Activated B cell treated with CpG ODN at 0.5 μM for 24 hours (primary cell): ENCODE measurements at regions of chr9 and their contacts with region 1.

Region 1: GRCh38 chr9:36935768-36936497 is 98.1 kb downstream of the PAX5 start:
- DNase-seq: no peak
- ATAC-seq: peak; percentile 64
- H3K4me3 Mint-ChIP-seq: peak overlapping the region; percentile 44
- H3K27ac Mint-ChIP-seq: peak overlapping the region; percentile 85
- H3K4me1 Mint-ChIP-seq: peaks cover 92% of the 10 kb centered on the region
- H3K27me3 Mint-ChIP-seq: no peaks in the 10 kb centered on the region
- CTCF ChIP-seq: no peak

Region 2: DNA sequence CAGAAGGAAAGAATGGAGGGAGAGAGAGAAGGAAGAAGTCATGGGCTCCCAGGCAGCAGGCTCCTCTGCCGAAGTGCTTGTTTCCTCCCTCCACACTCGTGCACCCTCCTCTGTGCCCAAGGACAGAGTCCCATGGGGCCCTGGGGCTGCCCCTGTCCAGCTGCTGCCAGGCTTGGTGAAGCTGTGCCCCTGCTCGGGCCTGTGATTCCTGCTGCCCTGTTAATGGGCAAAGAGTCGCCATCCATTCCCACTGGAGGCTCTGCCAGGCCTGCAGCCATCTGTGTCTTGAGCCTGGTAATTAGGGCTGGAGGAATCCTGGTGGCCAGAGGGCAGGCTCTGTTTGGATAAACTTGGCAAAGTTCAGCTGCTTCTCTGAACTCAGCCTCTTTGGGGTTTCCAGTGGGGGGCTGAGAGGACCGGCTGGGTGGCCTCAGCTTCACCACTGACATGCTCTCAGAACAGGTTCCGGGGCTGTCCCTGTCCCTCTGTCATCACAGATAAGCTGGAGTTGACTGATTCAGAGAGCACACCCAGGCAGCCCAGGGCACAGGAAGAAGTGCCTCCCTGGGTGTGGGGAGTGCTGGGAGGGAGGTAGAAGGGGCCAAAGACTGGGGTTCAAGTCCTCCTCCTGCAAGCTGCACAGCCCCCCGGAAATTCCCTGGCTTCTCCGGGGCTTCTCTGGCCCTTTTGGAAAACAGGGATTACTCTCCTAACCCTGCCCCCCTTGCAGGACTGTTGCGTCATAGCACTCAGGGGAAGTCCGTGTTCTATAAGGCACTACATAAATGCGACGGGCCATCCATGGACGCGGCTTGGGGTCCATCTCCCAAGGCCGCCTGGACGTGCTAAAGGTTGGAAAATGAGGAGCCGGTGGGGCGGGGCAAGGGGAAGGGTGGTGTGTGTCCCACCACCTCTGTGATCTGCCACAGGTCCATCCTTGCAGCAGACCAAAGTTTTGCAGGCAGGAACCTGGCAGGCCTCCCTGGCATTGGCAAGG is 56.6 kb before region 1 on chr9:
- CTCF ChIA-PET with region 1: no interaction called
- POLR2A ChIA-PET with region 1: no interaction called
- intact Hi-C with region 1: loop called (anchors 5 kb)
- DNase-seq: no peak
- ATAC-seq: peak; percentile 48
- H3K4me3 Mint-ChIP-seq: peak overlapping the region; percentile 5
- H3K27ac Mint-ChIP-seq: peak overlapping the region; percentile 87
- H3K4me1 Mint-ChIP-seq: peaks cover 81% of the 10 kb centered on the region
- H3K27me3 Mint-ChIP-seq: no peaks in the 10 kb centered on the region
- CTCF ChIP-seq: no peak

Region 3: GRCh38 chr9:36961561-36962298 is 25.8 kb after region 1 on chr9:
- CTCF ChIA-PET with region 1: no interaction called
- POLR2A ChIA-PET with region 1: no interaction called
- intact Hi-C with region 1: no loop called
- DNase-seq: no peak
- ATAC-seq: no peak
- H3K4me3 Mint-ChIP-seq: no peak overlapping the region
- H3K27ac Mint-ChIP-seq: peak overlapping the region; percentile 65
- H3K4me1 Mint-ChIP-seq: peaks cover 44% of the 10 kb centered on the region
- H3K27me3 Mint-ChIP-seq: no peaks in the 10 kb centered on the region
- CTCF ChIP-seq: no peak